ENCODE measurements at regions of chr20 and their contacts with region 1.

Region 1: DNA sequence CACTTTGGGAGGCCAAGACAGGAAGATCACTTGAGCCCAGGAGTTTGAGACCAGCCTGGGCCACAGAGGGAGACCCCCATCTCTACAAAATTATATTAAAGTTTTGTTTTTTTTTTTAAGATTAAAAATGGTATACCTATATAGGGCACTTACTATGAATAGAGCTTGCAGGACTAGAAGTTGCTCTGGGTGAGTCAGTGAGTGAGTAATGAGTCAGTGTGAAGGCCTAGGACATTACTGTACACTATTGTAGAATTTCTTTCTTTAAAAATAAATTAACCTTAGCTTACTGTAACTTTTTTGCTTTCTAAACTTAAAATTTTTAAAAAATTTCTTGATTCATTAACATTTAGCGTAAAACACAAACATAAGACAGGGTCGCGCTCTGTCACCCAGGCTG is 29.7 kb downstream of the STK35 start:
- DNase-seq: no peak
- H3K4me3 ChIP-seq: no peak overlapping the region
- H3K27ac ChIP-seq: peak overlapping the region; percentile 73
- H3K27me3 ChIP-seq: no peaks in the 10 kb centered on the region
- CTCF ChIP-seq: no peak

Region 2: GRCh38 chr20:1185790-1186334 is 945.5 kb before region 1 on chr20:
- CTCF ChIA-PET with region 1: interaction called, 12 read pairs
- POLR2A ChIA-PET with region 1: no interaction called
- DNase-seq: no peak
- H3K4me3 ChIP-seq: peak overlapping the region; percentile 37
- H3K27ac ChIP-seq: no peak overlapping the region
- H3K27me3 ChIP-seq: peaks cover 44% of the 10 kb centered on the region
- CTCF ChIP-seq: peak; percentile 59

Measured in AG04450 (cell line).